WTC11 (cell line): ENCODE measurements at regions of chr12 and their contacts with region 1.

Region 1: GRCh38 chr12:30985814-30986452 is 59.4 kb downstream of the TSPAN11 start:
- DNase-seq: peak; percentile 76
- ATAC-seq: peak; percentile 88
- H3K4me3 Mint-ChIP-seq: no peak overlapping the region
- H3K27ac Mint-ChIP-seq: no peak overlapping the region
- H3K4me1 Mint-ChIP-seq: peaks cover 10% of the 10 kb centered on the region
- H3K27me3 Mint-ChIP-seq: no peaks in the 10 kb centered on the region
- CTCF ChIP-seq: peak; percentile 56; the same call in 1 of the 2 replicates

Region 2: DNA sequence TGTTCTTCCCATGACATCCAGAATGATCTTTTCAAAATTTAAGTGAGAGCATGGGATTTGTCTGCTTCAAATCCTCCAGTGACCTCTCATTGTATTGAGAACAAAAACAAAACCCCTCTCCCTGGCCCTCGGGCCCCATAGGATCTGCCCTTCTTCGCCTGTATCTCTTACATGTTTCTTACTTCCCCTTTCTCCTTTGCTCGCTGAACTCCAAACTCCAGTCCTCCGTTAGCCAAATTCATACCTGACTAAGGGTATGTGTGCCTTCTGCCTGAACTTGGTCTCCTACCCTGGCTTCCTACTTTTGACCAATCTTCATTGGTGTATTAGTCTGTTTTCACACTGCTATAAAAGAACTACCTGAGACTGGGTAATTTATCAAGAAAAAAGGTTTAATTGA is 72.6 kb before region 1 on chr12:
- CTCF ChIA-PET with region 1: no interaction called
- POLR2A ChIA-PET with region 1: no interaction called
- DNase-seq: no peak
- ATAC-seq: no peak
- H3K4me3 Mint-ChIP-seq: no peak overlapping the region
- H3K27ac Mint-ChIP-seq: no peak overlapping the region
- H3K4me1 Mint-ChIP-seq: peaks cover 49% of the 10 kb centered on the region
- H3K27me3 Mint-ChIP-seq: peaks cover 10% of the 10 kb centered on the region; the same call in 1 of the 2 replicates
- CTCF ChIP-seq: no peak

Region 3: DNA sequence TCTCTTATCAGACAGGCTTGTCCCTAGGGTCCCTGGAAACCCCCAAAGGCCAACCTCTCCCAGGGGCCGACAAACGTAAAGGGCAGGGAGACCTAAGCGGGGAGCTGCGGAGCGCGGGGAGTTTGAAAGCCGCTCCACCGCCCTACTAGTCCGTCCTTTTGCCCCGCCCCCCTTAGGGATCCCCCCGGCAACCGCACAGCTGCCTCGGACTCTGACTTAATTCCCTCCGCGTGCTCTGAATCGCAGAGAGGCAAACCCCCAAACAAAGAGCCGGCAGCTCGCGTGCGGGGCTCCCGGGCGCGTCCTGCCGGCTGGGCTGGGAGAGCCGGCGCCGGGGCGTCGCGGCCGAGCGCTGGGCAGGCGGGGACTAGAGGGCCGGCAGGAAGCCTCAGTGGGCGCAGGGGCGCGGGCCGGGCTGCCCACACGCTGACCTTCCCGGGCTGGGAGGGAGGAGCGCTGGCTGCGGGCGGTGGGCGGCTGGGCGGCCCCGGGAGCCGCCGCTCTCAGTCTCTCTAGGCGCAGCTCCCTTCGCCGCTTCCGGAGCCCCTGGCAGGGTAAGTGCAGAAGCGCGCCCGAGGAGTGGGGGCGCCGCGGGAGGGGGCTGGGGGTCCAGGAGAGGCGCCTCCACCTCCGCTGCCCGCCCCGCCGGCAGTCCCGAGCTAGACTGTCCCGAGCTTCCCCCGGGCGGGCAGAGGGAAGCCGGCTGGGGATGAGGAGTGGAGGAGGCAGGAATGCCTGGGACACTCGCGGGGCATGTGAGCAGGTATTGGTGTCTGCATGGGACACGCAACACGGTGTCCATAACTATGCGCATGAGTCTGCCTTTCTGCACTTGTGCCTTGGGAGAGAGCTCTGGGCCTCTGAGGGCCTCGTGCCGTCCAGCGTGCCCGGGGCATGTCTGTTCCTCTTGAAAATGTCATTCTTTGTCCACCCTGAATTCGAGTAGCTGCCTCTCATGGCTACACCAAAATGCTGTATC is 59.4 kb before region 1 on chr12 and contains the start of gene TSPAN11:
- CTCF ChIA-PET with region 1: interaction called, 11 read pairs
- POLR2A ChIA-PET with region 1: interaction called, 5 read pairs
- DNase-seq: peak; percentile 79
- ATAC-seq: peak; percentile 78
- H3K4me3 Mint-ChIP-seq: peak within 1 kb of the TSS; percentile 62
- H3K27ac Mint-ChIP-seq: no peak within 1 kb of the TSS
- H3K4me1 Mint-ChIP-seq: peaks cover 45% of the 10 kb centered on the region
- H3K27me3 Mint-ChIP-seq: peaks cover 46% of the 10 kb centered on the region
- CTCF ChIP-seq: no peak
- total RNA-seq, gene TSPAN11: 4.6 to 6.1 TPM (median 5.3 TPM) in 3 replicates

Region 4: GRCh38 chr12:30970559-30971197 is 15.3 kb before region 1 on chr12:
- CTCF ChIA-PET with region 1: interaction called, 17 read pairs
- POLR2A ChIA-PET with region 1: no interaction called
- DNase-seq: no peak
- ATAC-seq: no peak
- H3K4me3 Mint-ChIP-seq: no peak overlapping the region
- H3K27ac Mint-ChIP-seq: no peak overlapping the region
- H3K4me1 Mint-ChIP-seq: peaks cover 18% of the 10 kb centered on the region
- H3K27me3 Mint-ChIP-seq: peaks cover 2% of the 10 kb centered on the region; the same call in 1 of the 2 replicates
- CTCF ChIP-seq: no peak